CD4-positive, alpha-beta memory T cell (primary cell): ENCODE measurements at regions of chr20 and their contacts with region 1.

Region 1: GRCh38 chr20:44310664-44311639 is at the start of gene FITM2:
- DNase-seq: peak; percentile 96 to 98 (median 98)
- H3K4me3 ChIP-seq: peak within 1 kb of the TSS; percentile 78 to 92
- H3K4me3 Mint-ChIP-seq: peak within 1 kb of the TSS; percentile 91 to 97 (median 95)
- H3K27ac ChIP-seq: peak within 1 kb of the TSS; percentile 64
- H3K27ac Mint-ChIP-seq: peak within 1 kb of the TSS; percentile 92 to 99 (median 95)
- H3K4me1 ChIP-seq: peaks cover 23% of the 10 kb centered on the region
- H3K4me1 Mint-ChIP-seq: peaks cover 18 to 29% (median 21%) of the 10 kb centered on the region in 4 donors
- H3K27me3 ChIP-seq: no peaks in the 10 kb centered on the region
- H3K27me3 Mint-ChIP-seq: peaks cover 0 to 2% of the 10 kb centered on the region in 2 donors
- total RNA-seq, gene FITM2: 5.8 to 6.3 TPM

Region 2: DNA sequence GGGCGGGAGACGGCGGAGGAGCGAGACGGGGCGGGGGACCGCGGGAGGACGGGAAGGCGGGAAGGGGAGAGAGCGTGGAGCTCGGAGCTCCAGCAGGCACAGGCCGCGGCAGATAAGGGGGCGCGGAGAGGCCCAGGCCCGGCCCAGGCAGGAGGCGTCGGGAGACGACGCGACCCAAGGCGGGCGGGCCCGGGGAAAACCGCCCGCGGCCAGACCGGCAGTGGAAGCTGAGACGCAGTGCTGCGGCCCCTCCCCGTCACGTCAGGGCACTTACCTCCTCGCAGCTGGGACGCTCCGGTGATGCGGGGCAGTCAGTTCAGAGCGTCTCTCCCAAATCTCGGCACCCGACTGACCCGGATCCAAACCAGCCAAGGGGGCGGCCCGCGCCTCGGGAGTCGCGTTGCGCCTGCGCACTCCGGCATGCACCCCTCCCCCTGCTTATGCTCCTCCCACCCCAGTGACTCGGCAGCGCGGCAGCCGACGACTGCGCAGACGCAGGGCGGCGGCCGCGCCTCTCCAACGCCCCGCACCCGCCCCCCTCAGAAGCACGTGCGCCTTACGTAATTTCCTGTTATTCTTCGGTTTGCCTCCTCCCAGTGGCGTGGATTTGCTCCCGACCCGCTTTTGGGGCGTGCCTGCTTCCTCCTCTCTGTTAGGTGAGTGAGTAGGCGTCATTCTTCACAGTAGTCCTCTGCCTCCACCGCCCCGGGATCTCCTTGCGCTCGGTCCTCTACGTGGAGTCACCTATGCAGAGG is 100.4 kb before region 1 on chr20 and contains the start of gene OSER1:
- CTCF ChIA-PET with region 1: interaction called, 669 read pairs
- POLR2A ChIA-PET with region 1: interaction called, 173 read pairs
- intact Hi-C with region 1: no loop called
- DNase-seq: peak; percentile 99
- H3K4me3 ChIP-seq: peak within 1 kb of the TSS; percentile 77 to 78
- H3K4me3 Mint-ChIP-seq: peak within 1 kb of the TSS; percentile 85 to 99 (median 94)
- H3K27ac ChIP-seq: peak within 1 kb of the TSS; percentile 98
- H3K27ac Mint-ChIP-seq: peak within 1 kb of the TSS; percentile 90 to 100 (median 98)
- H3K4me1 ChIP-seq: peaks cover 53% of the 10 kb centered on the region
- H3K4me1 Mint-ChIP-seq: peaks cover 42 to 79% (median 56%) of the 10 kb centered on the region in 4 donors
- H3K27me3 ChIP-seq: no peaks in the 10 kb centered on the region
- H3K27me3 Mint-ChIP-seq: no peaks in the 10 kb centered on the region
- total RNA-seq, gene OSER1: 35.5 to 36.6 TPM

Region 3: GRCh38 chr20:44234566-44235317 is 76.2 kb before region 1 on chr20:
- CTCF ChIA-PET with region 1: no interaction called
- POLR2A ChIA-PET with region 1: no interaction called
- intact Hi-C with region 1: no loop called
- DNase-seq: no peak
- H3K4me3 ChIP-seq: no peak overlapping the region
- H3K4me3 Mint-ChIP-seq: no peak overlapping the region
- H3K27ac ChIP-seq: no peak overlapping the region
- H3K27ac Mint-ChIP-seq: peak overlapping the region in 1 of 7 donors; percentile 0
- H3K4me1 ChIP-seq: no peaks in the 10 kb centered on the region
- H3K4me1 Mint-ChIP-seq: peaks cover 0 to 2% (median 0%) of the 10 kb centered on the region in 4 donors
- H3K27me3 ChIP-seq: no peaks in the 10 kb centered on the region
- H3K27me3 Mint-ChIP-seq: no peaks in the 10 kb centered on the region

Region 4: DNA sequence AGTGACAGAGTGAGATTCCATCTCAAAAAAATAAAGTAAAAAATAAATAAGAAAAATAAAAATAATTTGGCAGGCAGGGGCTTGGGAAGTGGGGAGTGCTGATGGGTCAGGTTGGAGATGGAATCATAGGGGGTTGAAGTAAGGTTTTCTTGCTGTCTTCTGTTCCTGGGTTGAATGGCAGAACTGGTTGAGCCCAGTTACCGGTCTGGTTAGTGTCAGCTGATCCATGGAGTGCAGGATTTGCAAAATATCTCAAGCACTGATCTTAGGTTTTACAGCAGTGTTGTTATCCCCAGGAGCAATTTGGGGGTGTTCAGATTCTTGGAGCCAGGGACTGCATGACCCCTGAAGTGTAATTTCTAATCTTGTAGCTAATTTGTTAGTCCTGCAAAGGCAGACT is 16.3 kb before region 1 on chr20:
- CTCF ChIA-PET with region 1: interaction called, 19 read pairs
- POLR2A ChIA-PET with region 1: interaction called, 3 read pairs
- intact Hi-C with region 1: no loop called
- DNase-seq: no peak
- H3K4me3 ChIP-seq: no peak overlapping the region
- H3K4me3 Mint-ChIP-seq: no peak overlapping the region
- H3K27ac ChIP-seq: no peak overlapping the region
- H3K27ac Mint-ChIP-seq: no peak overlapping the region
- H3K4me1 ChIP-seq: no peaks in the 10 kb centered on the region
- H3K4me1 Mint-ChIP-seq: peaks cover 0 to 4% (median 2%) of the 10 kb centered on the region in 4 donors
- H3K27me3 ChIP-seq: no peaks in the 10 kb centered on the region
- H3K27me3 Mint-ChIP-seq: no peaks in the 10 kb centered on the region

Region 5: DNA sequence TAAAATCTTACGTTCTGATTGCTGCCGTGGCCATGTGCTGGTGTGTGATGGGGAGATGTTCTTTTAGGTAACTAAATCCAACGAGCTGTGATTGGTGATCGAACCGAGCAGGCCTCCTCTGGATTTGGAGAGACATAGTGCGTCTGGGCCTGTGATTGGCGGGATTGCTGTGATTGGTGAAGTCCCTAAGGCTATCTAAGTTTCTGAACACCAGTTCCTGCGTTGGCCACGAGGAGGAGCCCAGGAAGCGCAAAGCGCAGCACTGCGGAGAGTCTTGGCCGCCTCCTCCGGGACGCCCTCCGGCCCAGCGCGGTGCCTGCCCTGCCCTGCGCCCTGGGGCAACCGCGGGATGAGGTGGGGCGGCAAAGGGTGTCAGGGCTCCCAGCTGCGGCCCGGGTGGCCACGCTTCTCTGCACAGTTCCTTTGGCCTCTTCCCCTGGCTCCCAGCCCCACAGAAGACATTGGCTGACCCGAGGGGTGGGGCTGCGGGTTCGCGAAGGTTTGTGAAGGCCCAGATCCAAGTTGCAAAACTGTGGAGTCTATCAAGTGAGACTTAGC is 77.6 kb after region 1 on chr20:
- CTCF ChIA-PET with region 1: interaction called, 9 read pairs
- POLR2A ChIA-PET with region 1: no interaction called
- intact Hi-C with region 1: loop called (anchors 5 kb)
- DNase-seq: peak; percentile 41 to 69 (median 46)
- H3K4me3 ChIP-seq: no peak overlapping the region
- H3K4me3 Mint-ChIP-seq: no peak overlapping the region
- H3K27ac ChIP-seq: no peak overlapping the region
- H3K27ac Mint-ChIP-seq: no peak overlapping the region
- H3K4me1 ChIP-seq: no peaks in the 10 kb centered on the region
- H3K4me1 Mint-ChIP-seq: peaks cover 2 to 11% (median 6%) of the 10 kb centered on the region in 4 donors
- H3K27me3 ChIP-seq: no peaks in the 10 kb centered on the region
- H3K27me3 Mint-ChIP-seq: peaks cover 8 to 17% of the 10 kb centered on the region in 2 donors

Region 6: DNA sequence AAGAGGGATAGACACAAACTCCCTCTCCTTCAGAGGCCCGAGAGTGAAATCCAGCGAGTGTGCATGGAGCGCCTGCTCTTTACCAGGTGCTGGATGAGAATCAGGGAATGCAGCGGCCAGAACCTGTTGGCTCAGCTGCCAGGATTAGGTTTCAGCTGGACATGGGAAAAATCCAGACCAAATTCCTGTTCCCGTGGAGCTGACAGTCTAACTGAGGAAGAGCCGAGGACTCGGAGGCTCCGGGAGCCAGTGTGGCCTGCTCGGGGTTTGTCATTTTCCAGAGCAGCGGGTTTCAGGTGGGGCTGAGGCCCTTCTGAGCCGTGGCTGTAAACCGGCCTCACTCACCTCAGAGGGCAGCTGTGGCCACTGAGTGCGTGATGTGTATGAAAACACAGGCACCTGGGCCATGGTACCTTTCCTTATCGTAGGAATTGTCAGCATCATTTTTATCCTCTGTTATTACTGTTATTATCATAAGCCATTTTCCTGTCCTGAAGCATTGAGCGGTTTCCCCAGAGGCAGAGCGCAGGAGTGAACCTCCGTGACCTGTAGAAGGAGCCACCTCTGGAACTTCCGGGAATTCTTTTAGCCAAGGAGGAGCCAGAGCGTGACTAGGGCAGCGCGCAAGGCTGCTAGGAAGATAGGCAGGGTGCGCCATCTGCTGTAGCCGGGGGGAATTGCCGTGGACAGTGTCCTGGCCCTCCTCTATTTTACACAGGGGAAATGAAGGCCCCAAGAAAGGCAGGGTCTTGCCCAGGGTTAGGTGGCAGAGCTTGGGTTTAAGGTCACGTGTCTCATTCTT is 298.8 kb after region 1 on chr20:
- CTCF ChIA-PET with region 1: interaction called, 9 read pairs
- POLR2A ChIA-PET with region 1: no interaction called
- intact Hi-C with region 1: loop called (anchors 10 kb)
- DNase-seq: peak; percentile 65 to 80 (median 74)
- H3K4me3 ChIP-seq: no peak overlapping the region
- H3K4me3 Mint-ChIP-seq: peak overlapping the region in 6 of 8 donors; percentile 62 to 77 (median 66)
- H3K27ac ChIP-seq: peak overlapping the region; percentile 23
- H3K27ac Mint-ChIP-seq: peak overlapping the region; percentile 17 to 98 (median 85)
- H3K4me1 ChIP-seq: peaks cover 12% of the 10 kb centered on the region
- H3K4me1 Mint-ChIP-seq: peaks cover 5 to 19% (median 12%) of the 10 kb centered on the region in 4 donors
- H3K27me3 ChIP-seq: no peaks in the 10 kb centered on the region
- H3K27me3 Mint-ChIP-seq: no peaks in the 10 kb centered on the region